ENCODE measurements at regions of chr9 and their contacts with region 1.

Region 1: GRCh38 chr9:87497604-87498045 is at the start of gene DAPK1:
- DNase-seq: peak; percentile 66 to 76 (median 68)
- ATAC-seq: peak; percentile 81
- H3K4me3 ChIP-seq: peak within 1 kb of the TSS; percentile 21
- H3K4me1 ChIP-seq: peaks cover 16% of the 10 kb centered on the region
- CTCF ChIP-seq: no peak
- total RNA-seq, gene DAPK1: 22.2 to 98.7 (median 25.9) TPM

Region 2: GRCh38 chr9:86424251-86424891 is 1073.3 kb before region 1 on chr9:
- intact Hi-C with region 1: no loop called
- DNase-seq: no peak
- ATAC-seq: no peak
- H3K4me3 ChIP-seq: no peak overlapping the region
- H3K4me1 ChIP-seq: no peaks in the 10 kb centered on the region
- CTCF ChIP-seq: no peak

Region 3: GRCh38 chr9:87395804-87396479 is 101.7 kb before region 1 on chr9:
- intact Hi-C with region 1: no loop called
- DNase-seq: no peak
- ATAC-seq: peak; percentile 76
- H3K4me3 ChIP-seq: no peak overlapping the region
- H3K4me1 ChIP-seq: peaks cover 4% of the 10 kb centered on the region
- CTCF ChIP-seq: no peak

Region 4: GRCh38 chr9:87613265-87614111 is 115.9 kb after region 1 on chr9:
- intact Hi-C with region 1: loop called in 1 of 2 experiments (anchors 10 kb)
- DNase-seq: no peak
- ATAC-seq: no peak
- H3K4me3 ChIP-seq: no peak overlapping the region
- H3K4me1 ChIP-seq: no peaks in the 10 kb centered on the region
- CTCF ChIP-seq: no peak

Region 5: GRCh38 chr9:87640385-87640795 is 142.8 kb after region 1 on chr9:
- intact Hi-C with region 1: loop called in 1 of 2 experiments (anchors 10 kb)
- DNase-seq: no peak
- ATAC-seq: no peak
- H3K4me3 ChIP-seq: no peak overlapping the region
- H3K4me1 ChIP-seq: no peaks in the 10 kb centered on the region
- CTCF ChIP-seq: no peak

Measured in mucosa of descending colon (tissue), 3 donors.